Right ventricle myocardium inferior (tissue), 1 donor: ENCODE measurements at regions of chr5 and their contacts with region 1.

Region 1: GRCh38 chr5:146041180-146041789 is 64.1 kb downstream of the PLAC8L1 start:
- DNase-seq: no peak
- ATAC-seq: no peak

Region 2: GRCh38 chr5:145936401-145937131 is 104.7 kb before region 1 on chr5 and contains the start of gene SH3RF2:
- intact Hi-C with region 1: loop called (anchors 5 kb)
- DNase-seq: peak; percentile 65
- ATAC-seq: peak; percentile 49
- total RNA-seq, gene SH3RF2: 267 TPM

Region 3: DNA sequence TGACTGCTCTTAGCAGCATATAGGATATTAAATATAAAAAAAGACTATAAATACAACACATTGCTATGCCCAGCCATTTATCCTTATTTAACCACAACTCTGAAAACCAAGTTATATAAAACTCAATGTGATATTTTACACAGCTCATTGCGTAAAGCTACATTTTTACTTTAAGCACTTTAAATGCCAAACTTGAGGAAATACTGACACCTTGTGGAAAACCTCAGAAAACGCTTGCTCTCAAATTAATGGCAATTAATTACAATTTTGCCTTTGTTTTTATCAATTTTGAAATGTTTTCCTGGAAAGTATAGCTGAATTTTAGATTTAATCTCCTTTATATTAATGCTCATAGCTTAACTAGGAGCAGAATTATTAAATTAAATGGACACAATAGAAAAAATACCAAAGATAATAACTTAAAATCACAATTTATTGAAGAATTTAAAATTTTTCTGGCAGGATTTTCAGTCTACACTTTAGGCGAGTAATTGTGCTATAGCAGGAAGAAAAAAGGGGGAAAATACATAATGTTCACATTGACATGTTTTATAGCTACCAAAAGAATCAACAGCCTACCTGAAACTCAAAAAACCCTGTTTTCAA is 89.3 kb after region 1 on chr5:
- intact Hi-C with region 1: no loop called
- DNase-seq: no peak
- ATAC-seq: no peak

Region 4: GRCh38 chr5:146173597-146173996 is 132.3 kb after region 1 on chr5:
- intact Hi-C with region 1: no loop called
- DNase-seq: no peak
- ATAC-seq: no peak